ENCODE measurements at regions of chr17 and their contacts with region 1.

Region 1: GRCh38 chr17:41648411-41649195 is 24.2 kb upstream of the KRT17 start:
- DNase-seq: peak; percentile 94
- H3K4me3 ChIP-seq: peak overlapping the region; percentile 36 to 49
- H3K27ac ChIP-seq: no peak overlapping the region
- H3K4me1 ChIP-seq: peaks cover 0 to 15% of the 10 kb centered on the region in 2 experiments; a peak in 1 of 4 replicates
- H3K27me3 ChIP-seq: no peaks in the 10 kb centered on the region
- CTCF ChIP-seq: peak; percentile 92
- EP300 ChIP-seq: no peak
- RAD21 ChIP-seq: peak; percentile 70

Region 2: DNA sequence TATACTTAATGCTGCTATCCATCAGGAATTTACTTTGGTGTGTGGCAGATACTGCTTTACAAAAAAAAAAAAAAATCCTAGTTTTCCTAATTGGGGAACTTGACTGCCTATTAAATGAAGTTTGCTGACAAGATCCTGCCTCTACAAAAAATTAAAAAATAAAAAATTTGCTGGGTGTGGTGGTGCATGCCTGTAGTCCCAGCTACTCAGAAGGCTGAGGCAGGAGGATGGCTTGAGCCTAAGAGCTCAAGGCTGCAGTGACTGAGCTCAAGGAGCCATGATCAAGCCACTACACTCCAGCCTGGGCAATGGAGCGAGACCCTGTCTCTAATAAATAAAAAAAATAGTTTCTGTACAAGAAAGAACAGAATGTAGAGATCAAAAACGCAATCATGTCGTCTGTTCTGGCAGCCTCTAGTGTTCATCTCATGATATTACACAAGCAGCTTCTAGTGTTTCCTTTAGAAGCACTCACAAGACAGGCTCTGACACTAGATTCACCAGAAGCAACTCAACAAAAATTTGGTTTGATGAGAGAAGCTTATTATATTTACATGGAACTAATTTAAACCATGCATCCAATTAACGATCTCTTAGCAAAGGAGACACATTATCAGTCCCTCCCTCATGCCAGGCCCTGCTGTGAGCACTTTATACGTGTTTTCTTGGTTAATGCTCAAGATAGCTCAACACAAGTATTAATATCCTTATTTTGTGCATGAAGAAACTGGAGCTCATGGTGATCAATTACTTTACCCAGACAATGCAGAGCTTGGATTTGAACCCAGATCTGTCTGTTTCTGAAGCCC is 326.3 kb before region 1 on chr17:
- CTCF ChIA-PET with region 1: interaction called, 11 read pairs
- POLR2A ChIA-PET with region 1: no interaction called
- DNase-seq: peak; percentile 50
- H3K4me3 ChIP-seq: no peak overlapping the region
- H3K27ac ChIP-seq: no peak overlapping the region
- H3K4me1 ChIP-seq: no peaks in the 10 kb centered on the region
- H3K27me3 ChIP-seq: no peaks in the 10 kb centered on the region
- CTCF ChIP-seq: peak; percentile 75
- EP300 ChIP-seq: no peak
- RAD21 ChIP-seq: peak; percentile 66

Region 3: GRCh38 chr17:41538565-41538991 is 110.0 kb before region 1 on chr17:
- CTCF ChIA-PET with region 1: interaction called, 646 read pairs
- POLR2A ChIA-PET with region 1: no interaction called
- DNase-seq: no peak
- H3K4me3 ChIP-seq: no peak overlapping the region
- H3K27ac ChIP-seq: peak overlapping the region; percentile 26 to 77; a peak in 2 of 4 replicates
- H3K4me1 ChIP-seq: peaks cover 17 to 37% of the 10 kb centered on the region in 2 experiments; a peak in 3 of 4 replicates
- H3K27me3 ChIP-seq: no peaks in the 10 kb centered on the region
- CTCF ChIP-seq: no peak
- EP300 ChIP-seq: no peak
- RAD21 ChIP-seq: no peak

Region 4: GRCh38 chr17:41588126-41588810 is 60.3 kb before region 1 on chr17:
- CTCF ChIA-PET with region 1: interaction called, 50 read pairs
- POLR2A ChIA-PET with region 1: no interaction called
- DNase-seq: no peak
- H3K4me3 ChIP-seq: no peak overlapping the region
- H3K27ac ChIP-seq: no peak overlapping the region
- H3K4me1 ChIP-seq: no peaks in the 10 kb centered on the region
- H3K27me3 ChIP-seq: peaks cover 21% of the 10 kb centered on the region; the same call in 1 of the 2 replicates
- CTCF ChIP-seq: no peak
- EP300 ChIP-seq: no peak
- RAD21 ChIP-seq: no peak

Region 5: DNA sequence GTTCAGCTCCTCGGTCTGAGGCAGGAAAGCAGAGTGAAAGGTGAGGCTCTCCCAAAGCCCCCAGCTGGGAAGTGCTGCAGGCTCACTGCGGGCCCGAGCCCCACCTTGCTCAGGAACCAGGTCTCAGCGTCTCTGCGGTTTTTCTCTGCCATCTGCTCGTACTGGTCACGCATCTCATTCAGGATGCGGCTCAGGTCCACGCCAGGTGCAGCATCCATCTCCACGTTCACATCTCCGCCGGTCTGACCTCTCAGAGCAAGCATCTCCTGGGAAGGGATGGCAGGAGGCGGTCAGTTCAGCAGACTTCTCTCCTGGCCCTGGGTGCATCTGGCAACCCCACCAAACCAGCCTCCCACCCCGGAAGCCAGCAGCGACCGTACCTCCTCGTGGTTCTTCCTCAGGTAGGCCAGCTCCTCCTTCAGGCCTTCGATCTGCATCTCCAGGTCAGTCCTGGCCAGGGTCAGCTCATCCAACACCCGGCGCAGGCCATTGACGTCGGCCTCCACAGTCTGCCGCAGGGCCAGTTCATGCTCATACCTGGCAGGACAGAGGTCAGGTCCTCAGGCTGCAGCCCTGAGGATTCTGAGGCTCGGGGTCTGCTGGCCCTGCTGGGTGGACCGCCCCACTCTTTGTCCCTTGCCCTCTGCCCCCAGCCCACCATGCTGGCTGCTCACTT is 37.5 kb before region 1 on chr17:
- CTCF ChIA-PET with region 1: interaction called, 34 read pairs
- POLR2A ChIA-PET with region 1: no interaction called
- DNase-seq: no peak
- H3K4me3 ChIP-seq: no peak overlapping the region
- H3K27ac ChIP-seq: no peak overlapping the region
- H3K4me1 ChIP-seq: no peaks in the 10 kb centered on the region; a peak in 1 of 4 replicates
- H3K27me3 ChIP-seq: peaks cover 20% of the 10 kb centered on the region; the same call in 1 of the 2 replicates
- CTCF ChIP-seq: no peak
- EP300 ChIP-seq: no peak
- RAD21 ChIP-seq: no peak

Region 6: GRCh38 chr17:41635121-41636097 is 13.2 kb before region 1 on chr17:
- CTCF ChIA-PET with region 1: interaction called, 79 read pairs
- POLR2A ChIA-PET with region 1: no interaction called
- DNase-seq: peak; percentile 90
- H3K4me3 ChIP-seq: no peak overlapping the region
- H3K27ac ChIP-seq: peak overlapping the region in 1 of 2 experiments; percentile 84; a peak in 2 of 4 replicates
- H3K4me1 ChIP-seq: peaks cover 0 to 22% of the 10 kb centered on the region in 2 experiments; a peak in 2 of 4 replicates
- H3K27me3 ChIP-seq: no peaks in the 10 kb centered on the region
- CTCF ChIP-seq: no peak
- EP300 ChIP-seq: peak in 1 of 2 experiments; percentile 41; a peak in 1 of 4 replicates
- RAD21 ChIP-seq: no peak

Region 7: GRCh38 chr17:41688699-41689496 is 40.3 kb after region 1 on chr17 and contains the start of gene EIF1:
- CTCF ChIA-PET with region 1: interaction called, 10 read pairs
- POLR2A ChIA-PET with region 1: no interaction called
- DNase-seq: peak; percentile 96
- H3K4me3 ChIP-seq: peak within 1 kb of the TSS; percentile 75 to 92
- H3K27ac ChIP-seq: peak within 1 kb of the TSS; percentile 98 to 100
- H3K4me1 ChIP-seq: peaks cover 13 to 21% of the 10 kb centered on the region in 2 experiments
- H3K27me3 ChIP-seq: no peaks in the 10 kb centered on the region
- CTCF ChIP-seq: no peak
- EP300 ChIP-seq: no peak
- RAD21 ChIP-seq: no peak
- polyA plus RNA-seq, gene EIF1: 300 and 336 TPM in 2 replicates

Region 8: GRCh38 chr17:41724476-41725050 is 76.0 kb after region 1 on chr17:
- CTCF ChIA-PET with region 1: no interaction called
- POLR2A ChIA-PET with region 1: no interaction called
- DNase-seq: no peak
- H3K4me3 ChIP-seq: no peak overlapping the region
- H3K27ac ChIP-seq: no peak overlapping the region
- H3K4me1 ChIP-seq: no peaks in the 10 kb centered on the region
- H3K27me3 ChIP-seq: no peaks in the 10 kb centered on the region
- CTCF ChIP-seq: no peak
- EP300 ChIP-seq: no peak
- RAD21 ChIP-seq: no peak

Measured in SK-N-SH (cell line).